Vagina (tissue), 2 donors: ENCODE measurements at regions of chr4 and their contacts with region 1.

Region 1: GRCh38 chr4:99894161-99894997 is at the start of gene LAMTOR3:
- DNase-seq: peak; percentile 94 to 98
- H3K4me3 ChIP-seq: peak within 1 kb of the TSS; percentile 74 to 90
- H3K27ac ChIP-seq: peak within 1 kb of the TSS; percentile 89
- H3K4me1 ChIP-seq: peaks cover 43% of the 10 kb centered on the region
- H3K27me3 ChIP-seq: no peaks in the 10 kb centered on the region
- CTCF ChIP-seq: no peak
- POLR2A ChIP-seq: no peak
- total RNA-seq, gene LAMTOR3: 46.2 TPM

Region 2: DNA sequence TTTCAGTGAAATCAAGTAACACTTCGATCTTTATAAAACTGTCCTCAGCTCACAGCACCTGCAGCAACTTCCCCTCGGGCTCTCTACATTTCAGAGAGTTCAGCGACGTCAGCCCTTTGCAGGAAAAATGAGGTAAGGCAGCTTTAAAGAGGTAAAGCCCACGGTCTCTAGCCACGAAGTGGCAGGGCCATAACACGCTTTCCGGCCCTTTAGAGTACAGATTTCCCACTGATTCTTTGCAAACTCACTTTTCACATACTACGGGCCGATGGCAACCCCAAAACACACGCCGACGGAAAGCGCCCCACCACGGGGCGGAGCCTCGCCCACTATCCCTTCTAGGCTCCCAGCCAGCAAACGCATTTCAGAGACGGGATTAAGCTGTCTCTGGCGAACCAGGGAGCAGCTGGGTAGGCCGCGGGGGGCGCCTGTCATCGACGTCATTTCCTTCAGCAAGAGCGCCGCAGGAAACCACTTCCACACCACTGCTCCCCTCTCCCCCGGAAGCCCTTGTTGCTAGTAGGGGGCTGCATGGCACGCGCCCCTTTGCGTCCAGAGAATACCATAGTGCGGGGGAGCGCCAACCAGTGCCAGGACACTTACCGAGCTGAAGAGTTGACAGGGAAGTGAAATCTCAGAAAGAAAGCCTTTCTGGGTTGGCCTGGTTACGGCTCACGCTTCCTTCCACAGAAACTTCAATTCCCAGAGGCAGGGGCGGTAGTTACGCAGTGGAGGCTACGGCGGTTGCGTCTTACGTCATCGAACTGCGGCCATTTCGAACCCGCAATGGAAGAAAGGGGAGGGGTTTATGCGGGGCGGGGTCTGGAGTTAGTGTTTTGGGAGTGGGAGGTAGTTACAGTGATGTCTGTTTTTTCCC is 330.8 kb before region 1 on chr4 and contains the start of gene TRMT10A:
- intact Hi-C with region 1: loop called (anchors 2 kb)
- DNase-seq: peak in 1 of 2 donors; percentile 97
- H3K4me3 ChIP-seq: peak within 1 kb of the TSS; percentile 66 to 75
- H3K27ac ChIP-seq: peak within 1 kb of the TSS; percentile 93
- H3K4me1 ChIP-seq: peaks cover 11% of the 10 kb centered on the region
- H3K27me3 ChIP-seq: no peaks in the 10 kb centered on the region
- CTCF ChIP-seq: peak in 1 of 3 experiments; percentile 9
- POLR2A ChIP-seq: peak in 1 of 2 donors; percentile 40
- total RNA-seq, gene TRMT10A: 1.2 TPM

Region 3: GRCh38 chr4:99949034-99949998 is 54.9 kb after region 1 on chr4:
- intact Hi-C with region 1: loop called (anchors 5 kb)
- DNase-seq: peak in 1 of 2 donors; percentile 93
- H3K4me3 ChIP-seq: peak overlapping the region; percentile 89 to 97
- H3K27ac ChIP-seq: peak overlapping the region; percentile 95
- H3K4me1 ChIP-seq: peaks cover 48% of the 10 kb centered on the region
- H3K27me3 ChIP-seq: no peaks in the 10 kb centered on the region
- CTCF ChIP-seq: peak; percentile 24 to 82 (median 70)
- POLR2A ChIP-seq: no peak

Region 4: DNA sequence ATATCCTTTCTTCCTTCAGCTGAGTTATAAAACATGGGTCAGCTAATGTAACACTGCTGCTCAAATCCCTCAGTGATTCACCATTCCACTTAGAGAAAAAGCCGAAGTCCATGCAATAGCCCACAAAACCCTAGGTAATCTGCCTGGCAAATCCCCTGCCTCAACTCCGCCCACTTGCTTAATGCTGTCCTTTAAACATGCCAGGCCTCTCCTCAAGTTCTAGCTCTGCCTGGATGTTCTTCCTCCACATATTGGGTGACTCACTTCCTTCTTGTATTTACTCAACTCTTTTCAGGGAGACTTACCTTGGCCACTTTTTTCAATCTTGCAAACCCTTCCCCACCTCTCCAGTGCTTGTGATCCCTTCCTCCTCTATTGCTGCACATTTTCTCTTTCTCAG is 533.7 kb after region 1 on chr4:
- intact Hi-C with region 1: no loop called
- DNase-seq: no peak
- H3K4me3 ChIP-seq: no peak overlapping the region
- H3K27ac ChIP-seq: no peak overlapping the region
- H3K4me1 ChIP-seq: no peaks in the 10 kb centered on the region
- H3K27me3 ChIP-seq: no peaks in the 10 kb centered on the region
- CTCF ChIP-seq: no peak
- POLR2A ChIP-seq: no peak